CD8-positive, alpha-beta T cell (primary cell): ENCODE measurements at regions of chr10 and their contacts with region 1.

Region 1: GRCh38 chr10:130110246-130111112 is at the start of gene C10orf143:
- DNase-seq: peak; percentile 96 to 100 (median 98)
- ATAC-seq: peak; percentile 76
- H3K4me3 ChIP-seq: peak within 1 kb of the TSS; percentile 88 to 95
- H3K4me3 Mint-ChIP-seq: peak within 1 kb of the TSS; percentile 99
- H3K27ac ChIP-seq: peak within 1 kb of the TSS; percentile 90 to 96
- H3K27ac Mint-ChIP-seq: peak within 1 kb of the TSS; percentile 97
- H3K4me1 ChIP-seq: peaks cover 18% of the 10 kb centered on the region
- H3K4me1 Mint-ChIP-seq: peaks cover 52% of the 10 kb centered on the region
- H3K27me3 ChIP-seq: no peaks in the 10 kb centered on the region
- H3K27me3 Mint-ChIP-seq: no peaks in the 10 kb centered on the region
- CTCF ChIP-seq: no peak
- total RNA-seq, gene C10orf143: 4.5 to 5.2 TPM

Region 2: DNA sequence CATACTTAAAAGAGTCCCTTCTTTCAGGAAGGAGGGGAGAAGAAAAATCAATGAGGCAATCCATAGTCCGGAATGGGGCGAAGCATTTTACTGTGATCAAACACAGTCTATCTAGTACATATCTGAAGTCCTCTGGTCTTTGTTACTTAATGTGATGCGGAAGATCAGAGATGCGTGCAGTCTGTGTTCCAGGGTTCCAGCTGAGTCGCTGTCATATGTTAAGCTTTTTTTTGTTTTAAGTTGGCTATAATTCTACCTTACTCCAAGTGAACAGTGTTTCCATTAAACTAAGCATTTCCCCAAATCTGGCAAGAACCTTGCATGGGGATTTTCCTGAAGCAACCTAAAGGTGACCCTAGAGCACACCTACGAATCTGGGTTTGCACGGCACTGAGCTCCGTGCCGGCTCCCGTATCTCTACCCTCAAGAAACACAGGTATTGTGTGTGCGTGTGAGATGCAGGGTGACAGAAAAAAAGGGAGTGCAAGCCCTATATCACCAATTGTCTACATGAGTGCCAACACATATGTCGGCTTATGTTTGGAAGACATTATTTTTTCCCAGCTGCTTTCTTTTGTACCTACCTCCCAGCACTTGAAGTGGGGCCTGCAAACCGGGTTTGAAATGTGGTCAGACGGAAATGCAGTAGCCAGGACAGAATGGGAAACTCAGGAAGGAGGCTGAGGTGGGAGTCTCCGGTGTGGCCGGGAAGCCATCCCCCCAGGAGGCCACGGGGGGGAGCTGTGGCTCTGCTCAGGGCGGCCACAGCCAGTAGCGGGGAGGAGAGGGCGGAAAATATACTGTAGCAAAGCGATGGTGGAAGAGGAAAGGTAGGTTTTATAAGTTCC is 1079.3 kb before region 1 on chr10:
- CTCF ChIA-PET with region 1: interaction called, 3 read pairs
- POLR2A ChIA-PET with region 1: interaction called, 3 read pairs
- intact Hi-C with region 1: loop called in 1 of 2 experiments (anchors 5 kb)
- DNase-seq: peak in 8 of 9 experiments; percentile 40 to 76 (median 60)
- ATAC-seq: peak; percentile 48
- H3K4me3 ChIP-seq: no peak overlapping the region
- H3K4me3 Mint-ChIP-seq: no peak overlapping the region
- H3K27ac ChIP-seq: no peak overlapping the region
- H3K27ac Mint-ChIP-seq: no peak overlapping the region
- H3K4me1 ChIP-seq: peaks cover 34% of the 10 kb centered on the region
- H3K4me1 Mint-ChIP-seq: peaks cover 33% of the 10 kb centered on the region
- H3K27me3 ChIP-seq: no peaks in the 10 kb centered on the region
- H3K27me3 Mint-ChIP-seq: peaks cover 3% of the 10 kb centered on the region
- CTCF ChIP-seq: peak; percentile 86

Region 3: DNA sequence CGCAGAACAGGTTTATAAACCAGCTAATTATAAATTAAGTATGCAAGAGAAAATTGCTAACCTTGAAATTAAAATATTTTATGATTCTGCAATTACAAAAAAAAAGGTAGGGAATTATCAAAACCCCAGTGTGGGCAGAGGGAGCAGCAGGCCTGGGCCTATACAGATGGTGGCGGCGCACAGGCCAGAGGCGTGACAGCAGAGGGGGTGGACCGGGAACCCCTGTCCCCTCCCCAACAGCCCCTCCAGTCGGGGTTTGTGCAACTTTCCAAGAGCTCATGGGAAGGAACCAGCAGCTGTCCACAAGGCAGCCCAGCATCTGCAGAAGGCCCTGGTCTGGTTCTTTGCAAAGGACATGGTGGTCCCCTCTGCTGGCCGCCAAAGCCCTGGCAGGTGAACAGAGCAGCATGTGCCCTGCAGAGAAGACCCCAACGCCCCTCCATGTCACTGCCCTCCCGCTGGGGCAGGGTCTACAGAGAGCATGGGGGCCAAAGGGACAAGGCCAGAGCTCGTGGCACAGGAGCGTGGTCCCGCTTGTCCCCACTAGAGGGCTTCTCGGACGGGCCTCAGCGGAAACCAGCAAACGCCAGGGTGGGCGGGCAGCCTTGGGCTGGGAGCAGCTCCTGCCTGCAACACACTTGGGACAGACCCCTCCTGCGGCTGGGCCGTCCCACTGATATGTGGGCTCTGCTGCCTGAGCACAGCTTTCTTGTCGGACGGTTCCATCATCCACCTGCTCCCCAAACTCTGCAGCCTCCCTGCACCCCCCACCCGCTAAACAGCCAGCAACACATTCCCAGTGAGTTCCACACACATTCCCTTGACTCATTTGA is 221.5 kb before region 1 on chr10:
- CTCF ChIA-PET with region 1: interaction called, 3 read pairs
- POLR2A ChIA-PET with region 1: no interaction called
- intact Hi-C with region 1: loop called in 1 of 2 experiments (anchors 5 kb)
- DNase-seq: peak; percentile 6 to 60 (median 37)
- ATAC-seq: peak; percentile 54
- H3K4me3 ChIP-seq: no peak overlapping the region
- H3K4me3 Mint-ChIP-seq: no peak overlapping the region
- H3K27ac ChIP-seq: no peak overlapping the region
- H3K27ac Mint-ChIP-seq: no peak overlapping the region
- H3K4me1 ChIP-seq: no peaks in the 10 kb centered on the region
- H3K4me1 Mint-ChIP-seq: no peaks in the 10 kb centered on the region
- H3K27me3 ChIP-seq: no peaks in the 10 kb centered on the region
- H3K27me3 Mint-ChIP-seq: no peaks in the 10 kb centered on the region
- CTCF ChIP-seq: peak; percentile 54

Region 4: DNA sequence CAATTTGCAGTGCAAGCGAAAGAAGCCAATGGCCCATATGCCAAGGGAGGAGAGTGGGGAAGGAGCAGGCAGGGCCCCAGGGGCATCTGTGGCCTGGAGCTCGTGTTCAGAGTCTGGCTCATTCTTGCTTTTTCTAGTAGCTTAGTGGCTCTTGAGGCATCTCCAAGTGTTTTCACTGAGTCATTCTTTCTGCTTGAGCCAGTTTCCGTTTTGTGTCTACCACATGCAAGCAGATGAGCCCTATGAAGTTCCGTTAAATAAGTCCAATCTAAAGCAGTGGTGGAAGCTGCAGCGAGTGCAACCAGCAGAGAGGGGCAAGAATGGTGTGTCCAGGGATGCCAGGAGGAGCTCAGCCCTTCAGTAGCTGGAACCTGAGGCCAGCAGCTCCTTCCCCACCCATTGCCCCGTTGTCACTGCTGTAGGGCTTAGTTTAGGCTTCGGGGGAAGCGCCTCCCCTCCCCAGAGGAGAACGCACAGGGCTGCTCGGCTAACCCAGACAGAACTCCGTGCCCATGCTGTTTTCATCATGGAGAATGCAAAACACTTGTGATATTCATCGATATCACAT is 89.0 kb before region 1 on chr10:
- CTCF ChIA-PET with region 1: interaction called, 3 read pairs
- POLR2A ChIA-PET with region 1: no interaction called
- intact Hi-C with region 1: loop called in 1 of 2 experiments (anchors 10 kb)
- DNase-seq: peak in 1 of 9 experiments; percentile 37
- ATAC-seq: no peak
- H3K4me3 ChIP-seq: no peak overlapping the region
- H3K4me3 Mint-ChIP-seq: no peak overlapping the region
- H3K27ac ChIP-seq: no peak overlapping the region
- H3K27ac Mint-ChIP-seq: no peak overlapping the region
- H3K4me1 ChIP-seq: no peaks in the 10 kb centered on the region
- H3K4me1 Mint-ChIP-seq: no peaks in the 10 kb centered on the region
- H3K27me3 ChIP-seq: no peaks in the 10 kb centered on the region
- H3K27me3 Mint-ChIP-seq: no peaks in the 10 kb centered on the region
- CTCF ChIP-seq: no peak

Region 5: GRCh38 chr10:130136226-130137089 is 26.0 kb after region 1 on chr10 and contains the start of gene GLRX3:
- CTCF ChIA-PET with region 1: interaction called, 26 read pairs
- POLR2A ChIA-PET with region 1: interaction called, 88 read pairs
- intact Hi-C with region 1: loop called (anchors 1 kb)
- DNase-seq: peak; percentile 71 to 93 (median 88)
- ATAC-seq: peak; percentile 95
- H3K4me3 ChIP-seq: peak within 1 kb of the TSS; percentile 76 to 80
- H3K4me3 Mint-ChIP-seq: peak within 1 kb of the TSS; percentile 93
- H3K27ac ChIP-seq: peak within 1 kb of the TSS; percentile 61 to 79
- H3K27ac Mint-ChIP-seq: peak within 1 kb of the TSS; percentile 92
- H3K4me1 ChIP-seq: peaks cover 36% of the 10 kb centered on the region
- H3K4me1 Mint-ChIP-seq: peaks cover 42% of the 10 kb centered on the region
- H3K27me3 ChIP-seq: no peaks in the 10 kb centered on the region
- H3K27me3 Mint-ChIP-seq: peaks cover 4% of the 10 kb centered on the region
- CTCF ChIP-seq: no peak
- total RNA-seq, gene GLRX3: 20.7 to 23.7 TPM

Region 6: GRCh38 chr10:130301021-130301892 is 190.8 kb after region 1 on chr10:
- CTCF ChIA-PET with region 1: no interaction called
- POLR2A ChIA-PET with region 1: interaction called, 10 read pairs
- intact Hi-C with region 1: no loop called
- DNase-seq: peak; percentile 32 to 74 (median 64)
- ATAC-seq: peak; percentile 70
- H3K4me3 ChIP-seq: peak overlapping the region; percentile 22 to 48
- H3K4me3 Mint-ChIP-seq: peak overlapping the region; percentile 73
- H3K27ac ChIP-seq: peak overlapping the region; percentile 14 to 59
- H3K27ac Mint-ChIP-seq: peak overlapping the region; percentile 84
- H3K4me1 ChIP-seq: no peaks in the 10 kb centered on the region
- H3K4me1 Mint-ChIP-seq: peaks cover 4% of the 10 kb centered on the region
- H3K27me3 ChIP-seq: no peaks in the 10 kb centered on the region
- H3K27me3 Mint-ChIP-seq: no peaks in the 10 kb centered on the region
- CTCF ChIP-seq: no peak

Region 7: GRCh38 chr10:131921184-131921583 is 1810.7 kb after region 1 on chr10:
- CTCF ChIA-PET with region 1: no interaction called
- POLR2A ChIA-PET with region 1: no interaction called
- intact Hi-C with region 1: no loop called
- DNase-seq: no peak
- ATAC-seq: no peak
- H3K4me3 ChIP-seq: no peak overlapping the region
- H3K4me3 Mint-ChIP-seq: no peak overlapping the region
- H3K27ac ChIP-seq: no peak overlapping the region
- H3K27ac Mint-ChIP-seq: peak overlapping the region; percentile 27
- H3K4me1 ChIP-seq: no peaks in the 10 kb centered on the region
- H3K4me1 Mint-ChIP-seq: peaks cover 73% of the 10 kb centered on the region
- H3K27me3 ChIP-seq: no peaks in the 10 kb centered on the region
- H3K27me3 Mint-ChIP-seq: no peaks in the 10 kb centered on the region
- CTCF ChIP-seq: no peak